Activated naive CD4-positive, alpha-beta T cell treated with anti-CD3 and anti-CD28 coated beads, Interleukin-2, amount 10 ng/mL, durations not matched to agents 7 days and 5 days (primary cell): ENCODE measurements at regions of chr4 and their contacts with region 1.

Region 1: GRCh38 chr4:38768968-38769394 is 13.8 kb downstream of the TLR10 start:
- DNase-seq: no peak
- H3K4me3 Mint-ChIP-seq: no peak overlapping the region
- H3K27ac Mint-ChIP-seq: no peak overlapping the region
- H3K4me1 Mint-ChIP-seq: peaks cover 4% of the 10 kb centered on the region
- H3K27me3 Mint-ChIP-seq: peaks cover 12% of the 10 kb centered on the region

Region 2: DNA sequence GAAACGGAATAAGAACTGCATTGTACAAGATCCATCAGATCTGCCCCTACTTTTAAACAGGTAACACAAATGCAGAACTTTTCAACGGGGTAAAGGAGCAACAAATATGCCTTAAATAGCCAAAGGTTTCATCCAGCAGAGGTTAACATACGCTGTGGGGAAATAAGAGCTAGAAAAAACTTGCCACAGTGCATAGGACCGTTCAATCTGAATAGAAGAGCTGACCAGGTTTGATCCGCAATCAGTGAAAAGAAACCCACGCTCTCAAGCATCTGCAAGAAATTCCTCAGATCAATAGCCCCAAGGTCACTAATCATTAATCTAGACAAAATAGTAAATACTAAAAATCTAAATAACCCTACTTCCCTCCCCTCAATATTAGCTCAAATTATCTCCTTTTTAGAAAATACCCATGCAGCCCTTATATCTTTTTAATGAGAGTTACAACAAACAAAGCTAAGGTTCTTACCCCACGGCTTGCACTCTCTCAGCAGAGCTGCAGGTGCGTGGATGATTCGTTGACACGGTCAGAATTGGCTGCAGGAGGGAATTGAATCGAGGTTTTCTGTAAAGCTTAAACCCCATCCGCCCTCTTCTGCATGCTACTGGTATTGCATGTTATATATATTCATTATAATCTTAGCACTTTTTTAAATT is 13.6 kb after region 1 on chr4 and contains the start of gene TLR10:
- CTCF ChIA-PET with region 1: interaction called, 89 read pairs
- DNase-seq: peak; percentile 49
- H3K4me3 Mint-ChIP-seq: no peak within 1 kb of the TSS
- H3K27ac Mint-ChIP-seq: no peak within 1 kb of the TSS
- H3K4me1 Mint-ChIP-seq: peaks cover 8% of the 10 kb centered on the region
- H3K27me3 Mint-ChIP-seq: no peaks in the 10 kb centered on the region